CD8-positive, alpha-beta T cell (primary cell): ENCODE measurements at regions of chr20 and their contacts with region 1.

Region 1: GRCh38 chr20:62793912-62794724 is 2.2 kb upstream of the MRGBP start:
- DNase-seq: peak; percentile 89 to 99 (median 94)
- ATAC-seq: peak; percentile 76
- H3K4me3 ChIP-seq: peak overlapping the region; percentile 69 to 84
- H3K4me3 Mint-ChIP-seq: peak overlapping the region; percentile 89
- H3K27ac ChIP-seq: peak overlapping the region; percentile 75 to 95
- H3K27ac Mint-ChIP-seq: peak overlapping the region; percentile 93
- H3K4me1 ChIP-seq: peaks cover 38% of the 10 kb centered on the region
- H3K4me1 Mint-ChIP-seq: peaks cover 30% of the 10 kb centered on the region
- H3K27me3 ChIP-seq: no peaks in the 10 kb centered on the region
- H3K27me3 Mint-ChIP-seq: no peaks in the 10 kb centered on the region
- CTCF ChIP-seq: no peak

Region 2: GRCh38 chr20:62500237-62500864 is 293.8 kb before region 1 on chr20:
- CTCF ChIA-PET with region 1: interaction called, 11 read pairs
- POLR2A ChIA-PET with region 1: no interaction called
- intact Hi-C with region 1: loop called in 1 of 2 experiments (anchors 1 kb)
- DNase-seq: peak; percentile 62 to 88 (median 82)
- ATAC-seq: peak; percentile 64
- H3K4me3 ChIP-seq: no peak overlapping the region
- H3K4me3 Mint-ChIP-seq: no peak overlapping the region
- H3K27ac ChIP-seq: no peak overlapping the region
- H3K27ac Mint-ChIP-seq: no peak overlapping the region
- H3K4me1 ChIP-seq: peaks cover 7% of the 10 kb centered on the region
- H3K4me1 Mint-ChIP-seq: peaks cover 11% of the 10 kb centered on the region
- H3K27me3 ChIP-seq: no peaks in the 10 kb centered on the region
- H3K27me3 Mint-ChIP-seq: peaks cover 2% of the 10 kb centered on the region
- CTCF ChIP-seq: peak; percentile 76

Region 3: DNA sequence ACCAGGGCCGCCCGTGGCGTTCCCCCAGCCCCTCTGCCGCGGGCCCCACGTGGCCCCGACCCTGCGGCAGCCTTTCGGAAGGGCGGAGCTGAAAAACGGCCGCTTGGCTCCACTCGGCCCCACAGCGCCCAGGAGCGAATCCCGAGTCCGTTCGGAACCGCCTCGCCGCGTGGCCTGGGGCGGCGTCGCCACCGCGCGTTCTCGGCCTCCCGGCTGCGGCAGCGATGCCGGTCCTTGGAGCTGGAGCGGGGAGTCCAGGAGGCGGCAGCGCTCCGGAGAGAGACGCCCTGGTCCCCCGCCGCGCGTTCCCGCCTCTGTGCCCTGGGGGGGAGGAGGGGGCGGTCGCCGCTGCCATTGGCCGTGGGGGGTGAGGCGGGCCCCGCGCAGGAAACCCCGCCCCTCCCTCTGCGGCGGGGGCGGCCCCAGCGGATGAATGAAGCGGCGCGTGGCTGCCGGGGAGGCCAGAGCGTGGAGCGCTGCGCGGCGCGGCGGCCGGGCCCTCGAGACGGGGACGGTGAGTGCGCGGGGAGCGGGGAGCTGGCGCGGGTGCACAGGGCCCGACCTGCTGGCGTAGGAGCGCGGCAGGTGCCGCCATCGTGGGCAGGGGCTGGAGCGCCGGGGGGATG is 152.0 kb before region 1 on chr20 and contains the start of gene SLCO4A1:
- CTCF ChIA-PET with region 1: interaction called, 8 read pairs
- POLR2A ChIA-PET with region 1: interaction called, 6 read pairs
- intact Hi-C with region 1: loop called (anchors 1 to 2 kb)
- DNase-seq: peak; percentile 57 to 90 (median 80)
- ATAC-seq: peak; percentile 92
- H3K4me3 ChIP-seq: peak within 1 kb of the TSS; percentile 34 to 59
- H3K4me3 Mint-ChIP-seq: peak within 1 kb of the TSS; percentile 85
- H3K27ac ChIP-seq: no peak within 1 kb of the TSS
- H3K27ac Mint-ChIP-seq: no peak within 1 kb of the TSS
- H3K4me1 ChIP-seq: peaks cover 21% of the 10 kb centered on the region
- H3K4me1 Mint-ChIP-seq: peaks cover 7% of the 10 kb centered on the region
- H3K27me3 ChIP-seq: no peaks in the 10 kb centered on the region
- H3K27me3 Mint-ChIP-seq: peaks cover 2% of the 10 kb centered on the region
- CTCF ChIP-seq: no peak
- total RNA-seq, gene SLCO4A1: 4.5 to 4.7 TPM

Region 4: GRCh38 chr20:62702886-62703854 is 90.9 kb before region 1 on chr20:
- CTCF ChIA-PET with region 1: interaction called, 5 read pairs
- POLR2A ChIA-PET with region 1: interaction called, 4 read pairs
- intact Hi-C with region 1: loop called in 1 of 2 experiments (anchors 1 kb)
- DNase-seq: peak in 3 of 9 experiments; percentile 27 to 51 (median 27)
- ATAC-seq: peak; percentile 62
- H3K4me3 ChIP-seq: no peak overlapping the region
- H3K4me3 Mint-ChIP-seq: no peak overlapping the region
- H3K27ac ChIP-seq: no peak overlapping the region
- H3K27ac Mint-ChIP-seq: peak overlapping the region; percentile 62
- H3K4me1 ChIP-seq: no peaks in the 10 kb centered on the region
- H3K4me1 Mint-ChIP-seq: peaks cover 5% of the 10 kb centered on the region
- H3K27me3 ChIP-seq: peaks cover 2 to 5% of the 10 kb centered on the region in 2 experiments
- H3K27me3 Mint-ChIP-seq: peaks cover 12% of the 10 kb centered on the region
- CTCF ChIP-seq: no peak

Region 5: GRCh38 chr20:62808211-62808865 is 14.2 kb after region 1 on chr20:
- CTCF ChIA-PET with region 1: interaction called, 39 read pairs
- POLR2A ChIA-PET with region 1: interaction called, 42 read pairs
- intact Hi-C with region 1: loop called (anchors 1 kb)
- DNase-seq: peak; percentile 58 to 87 (median 78)
- ATAC-seq: peak; percentile 49
- H3K4me3 ChIP-seq: no peak overlapping the region
- H3K4me3 Mint-ChIP-seq: peak overlapping the region; percentile 50
- H3K27ac ChIP-seq: no peak overlapping the region
- H3K27ac Mint-ChIP-seq: peak overlapping the region; percentile 60
- H3K4me1 ChIP-seq: peaks cover 37% of the 10 kb centered on the region
- H3K4me1 Mint-ChIP-seq: peaks cover 29% of the 10 kb centered on the region
- H3K27me3 ChIP-seq: no peaks in the 10 kb centered on the region
- H3K27me3 Mint-ChIP-seq: no peaks in the 10 kb centered on the region
- CTCF ChIP-seq: peak; percentile 95

Region 6: DNA sequence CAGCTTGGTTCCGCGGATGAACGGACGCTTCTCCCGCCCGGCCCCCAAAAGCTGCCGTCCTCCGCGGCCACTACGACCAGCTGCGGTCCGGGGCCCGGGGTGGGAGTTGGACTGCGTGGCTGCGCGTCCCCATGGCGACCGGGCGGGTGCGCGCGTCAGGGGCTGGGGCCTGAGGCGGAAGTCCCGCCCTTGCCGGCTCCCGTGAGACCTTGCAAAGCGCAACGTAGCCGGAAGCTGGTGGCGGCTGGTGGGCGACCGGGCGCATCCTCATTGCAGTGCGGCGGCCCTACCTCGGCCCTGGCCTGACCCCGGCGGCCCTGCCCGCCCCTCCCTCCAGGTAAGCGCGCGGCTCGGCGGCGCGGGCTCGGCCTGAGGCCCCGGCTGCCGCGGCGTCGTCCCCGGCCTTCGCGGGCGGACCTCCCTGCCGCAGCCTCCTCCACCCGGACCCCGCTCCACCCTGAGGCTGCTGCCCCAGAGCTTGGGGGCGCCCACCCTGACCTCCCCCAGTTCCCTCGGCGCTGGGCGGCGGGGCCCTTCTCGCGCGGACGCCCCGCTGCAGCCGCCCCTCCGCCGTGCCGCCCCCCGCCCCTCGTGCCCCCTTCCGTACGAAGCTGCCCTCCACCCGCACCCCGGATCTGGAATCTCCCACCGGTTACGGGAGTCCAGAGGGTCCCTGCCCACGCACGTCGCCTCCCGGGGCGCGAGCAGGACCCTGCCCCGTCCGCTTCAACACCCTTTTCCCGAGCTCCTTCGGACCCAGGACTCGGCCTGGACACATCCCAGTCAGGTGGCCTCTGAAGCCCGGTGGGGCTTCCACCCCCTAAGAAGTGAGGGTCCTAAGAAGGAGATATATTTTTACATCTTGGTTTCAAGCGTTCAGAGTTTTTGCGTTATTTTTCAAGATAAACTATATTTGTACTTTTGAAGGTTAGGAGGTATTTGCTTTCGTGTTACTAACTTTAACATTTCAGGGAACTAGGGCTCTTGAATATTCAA is 478.8 kb after region 1 on chr20 and contains the start of gene ARFGAP1:
- CTCF ChIA-PET with region 1: no interaction called
- POLR2A ChIA-PET with region 1: no interaction called
- intact Hi-C with region 1: loop called in 1 of 2 experiments (anchors 2 kb)
- DNase-seq: peak; percentile 71 to 93 (median 89)
- ATAC-seq: peak; percentile 93
- H3K4me3 ChIP-seq: peak within 1 kb of the TSS; percentile 61 to 78
- H3K4me3 Mint-ChIP-seq: peak within 1 kb of the TSS; percentile 87
- H3K27ac ChIP-seq: peak within 1 kb of the TSS; percentile 54 to 63
- H3K27ac Mint-ChIP-seq: peak within 1 kb of the TSS; percentile 83
- H3K4me1 ChIP-seq: peaks cover 18% of the 10 kb centered on the region
- H3K4me1 Mint-ChIP-seq: peaks cover 35% of the 10 kb centered on the region
- H3K27me3 ChIP-seq: no peaks in the 10 kb centered on the region
- H3K27me3 Mint-ChIP-seq: no peaks in the 10 kb centered on the region
- CTCF ChIP-seq: no peak
- total RNA-seq, gene ARFGAP1: 121 to 123 TPM